ENCODE measurements at regions of chr19 and their contacts with region 1.

Region 1: DNA sequence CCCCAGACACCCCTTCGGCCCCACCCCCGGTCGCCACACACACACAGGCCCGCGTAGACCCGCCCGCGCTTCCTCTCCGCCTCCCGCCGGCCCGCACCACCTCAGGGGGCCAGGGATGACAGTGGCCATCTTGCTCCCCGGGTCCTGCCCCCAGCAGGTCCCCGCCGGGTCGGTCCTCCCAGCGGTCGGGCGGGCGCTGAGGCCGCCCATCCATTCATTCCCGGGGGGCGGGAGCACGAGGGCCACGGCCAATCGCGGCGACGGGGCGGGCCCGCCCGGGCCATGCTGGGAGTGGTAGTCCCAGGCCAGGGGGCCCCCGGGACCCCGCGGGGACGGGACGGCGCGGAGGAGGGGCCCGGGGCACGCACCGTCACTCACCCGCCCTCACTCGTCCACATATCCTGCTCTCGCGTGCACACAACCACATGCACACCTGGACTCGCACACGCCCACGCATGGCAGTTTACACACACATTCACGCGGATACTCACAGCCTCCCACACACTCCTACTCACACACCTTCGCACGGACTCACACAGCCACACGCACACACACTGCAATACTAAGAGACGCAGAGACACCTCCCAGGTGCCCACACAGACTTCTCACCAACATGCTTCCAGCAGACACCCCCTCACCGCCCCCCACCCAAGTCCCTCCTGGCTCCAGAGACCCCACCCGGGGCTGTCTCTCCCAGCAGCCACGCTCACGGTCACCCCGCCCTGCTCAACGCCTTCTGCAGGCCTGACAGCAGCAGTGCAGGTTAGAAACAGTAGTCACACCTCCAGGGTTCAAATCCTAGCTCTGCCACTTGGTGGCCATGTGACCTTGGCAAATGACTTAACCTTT is at the start of gene DPF1:
- DNase-seq: peak in 2 of 7 donors; percentile 35 to 44
- H3K4me3 ChIP-seq: peak within 1 kb of the TSS in 1 of 4 donors; percentile 44
- H3K27ac ChIP-seq: no peak within 1 kb of the TSS
- H3K4me1 ChIP-seq: peaks cover 14 to 15% of the 10 kb centered on the region in 2 donors
- H3K27me3 ChIP-seq: peaks cover 57% of the 10 kb centered on the region
- CTCF ChIP-seq: no peak
- POLR2A ChIP-seq: no peak
- total RNA-seq, gene DPF1: 0.37 to 1.3 (median 0.75) TPM in 4 of 9 donors, not detected in the others

Region 2: DNA sequence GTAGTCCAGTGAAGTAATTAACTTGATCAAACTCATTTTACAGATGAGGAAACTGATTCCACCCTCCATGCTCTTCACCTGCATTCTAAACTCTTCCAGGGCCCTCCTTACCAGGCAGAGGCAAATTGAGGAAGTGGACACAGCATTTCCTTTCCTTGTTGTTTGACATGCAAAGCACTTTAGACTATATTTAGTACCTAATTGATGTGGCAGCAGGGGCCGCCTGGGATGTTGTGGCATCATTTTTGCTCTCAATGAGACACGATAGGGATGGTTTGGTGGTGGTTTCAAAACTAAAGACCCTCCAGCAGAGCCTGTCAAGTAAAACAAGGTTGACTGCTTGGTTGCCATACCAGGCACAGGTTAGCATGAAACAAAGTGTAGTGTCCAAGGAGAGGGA is 309.3 kb before region 1 on chr19:
- intact Hi-C with region 1: loop called in 1 of 2 experiments (anchors 5 kb)
- DNase-seq: no peak
- H3K4me3 ChIP-seq: no peak overlapping the region
- H3K27ac ChIP-seq: no peak overlapping the region
- H3K4me1 ChIP-seq: no peaks in the 10 kb centered on the region
- H3K27me3 ChIP-seq: no peaks in the 10 kb centered on the region
- CTCF ChIP-seq: no peak
- POLR2A ChIP-seq: no peak

Region 3: GRCh38 chr19:38115271-38115802 is 108.9 kb before region 1 on chr19:
- intact Hi-C with region 1: no loop called
- DNase-seq: no peak
- H3K4me3 ChIP-seq: no peak overlapping the region
- H3K27ac ChIP-seq: no peak overlapping the region
- H3K4me1 ChIP-seq: no peaks in the 10 kb centered on the region
- H3K27me3 ChIP-seq: no peaks in the 10 kb centered on the region
- CTCF ChIP-seq: no peak
- POLR2A ChIP-seq: no peak

Region 4: DNA sequence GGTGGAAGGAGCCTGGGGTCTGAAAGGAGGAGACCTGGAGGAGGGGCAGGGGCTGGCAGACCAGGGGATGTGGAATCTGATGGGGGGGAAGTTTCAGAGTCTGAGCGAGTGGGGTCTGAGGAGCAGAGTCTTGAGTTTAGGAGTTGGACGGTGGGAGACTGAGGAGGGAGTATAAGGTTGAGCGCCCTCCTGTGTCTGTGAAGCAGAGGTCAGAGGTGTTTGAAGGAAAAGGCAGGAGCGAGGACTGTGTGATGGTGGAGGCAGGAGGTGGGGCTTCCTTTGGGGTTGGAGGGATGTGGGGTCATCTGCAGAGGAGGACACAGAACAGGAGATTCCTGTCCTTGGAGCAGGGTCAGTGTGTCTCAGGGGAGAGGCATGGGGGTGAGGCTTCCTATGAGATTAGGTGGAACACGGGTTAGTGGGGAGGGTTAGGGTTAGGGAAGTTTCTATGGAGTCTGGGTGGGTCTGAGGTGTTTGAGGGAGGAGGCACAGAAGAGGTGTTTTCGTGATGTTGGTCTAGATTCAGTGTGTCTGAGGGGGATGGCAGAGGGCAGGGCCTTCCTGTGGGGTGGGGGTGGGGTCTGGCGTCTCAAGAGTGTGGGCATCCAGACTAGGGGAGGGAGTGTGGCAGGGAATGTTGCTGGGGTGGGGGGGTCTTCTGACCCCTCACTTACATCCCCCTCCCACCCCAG is 217.6 kb after region 1 on chr19:
- intact Hi-C with region 1: no loop called
- DNase-seq: no peak
- H3K4me3 ChIP-seq: no peak overlapping the region
- H3K27ac ChIP-seq: no peak overlapping the region
- H3K4me1 ChIP-seq: no peaks in the 10 kb centered on the region
- H3K27me3 ChIP-seq: no peaks in the 10 kb centered on the region
- CTCF ChIP-seq: no peak
- POLR2A ChIP-seq: no peak

Measured in adrenal gland (tissue), 19 donors.